ENCODE measurements at regions of chr19 and their contacts with region 1.

Region 1: GRCh38 chr19:2944775-2945574 is at the start of gene ZNF77:
- DNase-seq: peak; percentile 100
- H3K4me3 ChIP-seq: peak within 1 kb of the TSS; percentile 57
- H3K27ac ChIP-seq: peak within 1 kb of the TSS; percentile 77
- H3K4me1 ChIP-seq: no peaks in the 10 kb centered on the region
- H3K27me3 ChIP-seq: no peaks in the 10 kb centered on the region
- CTCF ChIP-seq: no peak
- total RNA-seq, gene ZNF77: 3.1 to 3.3 TPM

Region 2: GRCh38 chr19:2887391-2887914 is 57.5 kb before region 1 on chr19:
- intact Hi-C with region 1: loop called (anchors 5 kb)
- DNase-seq: no peak
- H3K4me3 ChIP-seq: no peak overlapping the region
- H3K27ac ChIP-seq: no peak overlapping the region
- H3K4me1 ChIP-seq: no peaks in the 10 kb centered on the region
- H3K27me3 ChIP-seq: no peaks in the 10 kb centered on the region
- CTCF ChIP-seq: peak; percentile 62

Region 3: GRCh38 chr19:3006075-3006767 is 61.2 kb after region 1 on chr19:
- intact Hi-C with region 1: no loop called
- DNase-seq: peak; percentile 61
- H3K4me3 ChIP-seq: no peak overlapping the region
- H3K27ac ChIP-seq: no peak overlapping the region
- H3K4me1 ChIP-seq: no peaks in the 10 kb centered on the region
- H3K27me3 ChIP-seq: no peaks in the 10 kb centered on the region
- CTCF ChIP-seq: no peak

Measured in colonic mucosa (tissue), 4 donors.